Ascending aorta (tissue), 2 donors: ENCODE measurements at regions of chr22 and their contacts with region 1.

Region 1: DNA sequence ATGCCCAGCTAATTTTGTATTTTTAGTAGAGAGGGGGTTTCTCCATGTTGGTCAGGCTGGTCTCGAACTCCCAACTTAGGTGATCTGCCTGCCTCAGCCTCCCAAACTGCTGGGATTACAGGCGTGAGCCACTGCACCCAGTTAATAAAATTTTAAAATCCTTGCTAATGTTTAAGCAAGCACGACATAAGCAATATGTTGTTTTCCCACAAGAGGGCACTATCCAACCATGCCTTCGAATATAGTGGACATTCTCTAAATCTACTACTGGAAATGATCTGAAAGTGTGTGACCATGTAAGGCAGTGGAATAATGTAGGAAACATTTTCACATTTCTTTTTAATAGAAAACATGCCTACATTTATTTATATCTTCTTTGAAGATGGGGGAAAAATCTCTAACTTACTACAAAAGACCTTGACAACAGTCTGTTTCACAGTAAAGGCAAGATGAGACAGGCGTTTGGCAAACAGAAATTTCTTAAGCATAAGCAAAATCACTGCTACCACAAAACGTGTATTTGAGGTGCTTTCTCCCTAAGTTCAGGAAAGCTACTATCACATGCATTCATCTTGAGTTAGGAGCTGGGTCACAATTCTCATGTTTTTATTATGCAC is 38.2 kb downstream of the PITPNB start:
- DNase-seq: peak in 1 of 2 donors; percentile 76
- H3K4me3 ChIP-seq: peak overlapping the region in 1 of 2 donors; percentile 8
- H3K27ac ChIP-seq: peak overlapping the region; percentile 76 to 85
- H3K4me1 ChIP-seq: peaks cover 11 to 51% of the 10 kb centered on the region in 2 donors
- H3K27me3 ChIP-seq: no peaks in the 10 kb centered on the region
- CTCF ChIP-seq: peak; percentile 76 to 84 (median 83)

Region 2: DNA sequence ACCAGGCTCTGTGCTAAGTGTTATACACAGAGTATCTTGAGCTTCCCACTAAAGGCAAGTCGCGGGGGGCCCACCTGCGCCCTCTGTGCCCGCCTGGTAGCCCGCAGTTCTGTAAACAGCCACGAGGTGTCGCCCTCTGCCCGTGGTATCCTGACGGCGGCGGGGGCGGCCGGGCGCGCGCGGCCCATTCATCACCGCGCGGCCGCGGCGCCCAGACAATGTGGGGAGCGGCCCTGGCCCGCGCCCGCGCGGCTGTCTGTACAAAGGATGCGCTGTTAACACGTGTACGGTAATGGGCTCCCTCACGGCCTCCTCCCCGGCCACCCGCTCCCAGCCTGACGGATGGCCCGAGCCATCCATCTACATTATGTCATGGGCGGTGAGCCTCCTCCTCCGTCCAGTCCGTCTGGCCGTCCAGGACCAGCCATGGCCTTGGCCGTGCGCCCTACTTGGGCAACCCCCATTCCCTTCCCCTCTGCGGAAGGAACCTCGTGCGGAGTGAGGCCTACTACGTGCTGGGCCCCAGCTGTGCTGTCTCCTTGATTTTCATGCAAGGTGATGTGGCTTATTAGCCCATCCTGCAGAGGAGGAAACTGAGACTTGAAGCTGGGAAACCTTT is 1124.1 kb before region 1 on chr22:
- intact Hi-C with region 1: loop called (anchors 10 kb)
- DNase-seq: peak in 1 of 2 donors; percentile 78
- H3K4me3 ChIP-seq: peak overlapping the region; percentile 51 to 52
- H3K27ac ChIP-seq: no peak overlapping the region
- H3K4me1 ChIP-seq: no peaks in the 10 kb centered on the region
- H3K27me3 ChIP-seq: no peaks in the 10 kb centered on the region
- CTCF ChIP-seq: peak; percentile 87 to 97 (median 93)

Region 3: DNA sequence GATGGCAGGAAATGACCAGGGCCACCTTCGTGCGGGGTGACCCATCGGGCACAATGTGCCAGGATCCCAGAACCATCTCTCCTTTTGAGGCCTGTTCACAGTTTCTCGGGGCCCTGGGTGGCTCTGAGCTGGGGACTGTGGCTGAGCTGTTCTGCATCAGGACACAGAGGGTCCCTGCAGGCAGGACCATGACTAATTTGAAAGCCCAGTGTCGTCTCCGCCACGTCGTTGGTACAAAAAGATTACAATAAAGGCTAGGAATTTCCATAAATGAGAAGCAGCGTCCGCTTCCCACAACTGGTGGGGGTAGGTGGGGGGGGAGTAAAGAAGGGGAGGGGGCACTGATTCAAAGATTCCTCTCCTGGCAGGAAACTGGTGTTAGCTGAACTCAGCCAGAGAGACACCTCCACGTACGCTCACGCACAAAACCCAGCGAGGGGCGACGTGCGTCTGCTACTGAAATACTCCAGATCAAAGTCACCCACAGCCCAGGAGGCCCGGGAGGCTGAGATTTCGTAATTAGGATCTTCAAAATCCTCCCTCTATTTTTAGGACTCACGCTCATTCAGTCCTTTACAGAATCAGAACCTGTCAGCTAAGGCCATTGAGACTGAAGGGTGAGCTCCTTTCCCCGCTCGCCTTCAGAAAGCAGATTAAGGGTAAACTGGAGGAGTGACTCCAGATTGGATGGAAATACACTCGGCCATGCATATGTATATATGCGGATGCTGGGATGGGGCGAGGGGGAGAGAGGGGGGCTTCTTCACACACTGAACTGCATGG is 90.3 kb before region 1 on chr22:
- intact Hi-C with region 1: no loop called
- DNase-seq: no peak
- H3K4me3 ChIP-seq: peak overlapping the region; percentile 28 to 77
- H3K27ac ChIP-seq: peak overlapping the region; percentile 92 to 96
- H3K4me1 ChIP-seq: peaks cover 7 to 53% of the 10 kb centered on the region in 2 donors
- H3K27me3 ChIP-seq: no peaks in the 10 kb centered on the region
- CTCF ChIP-seq: no peak